ENCODE measurements at regions of chr1 and their contacts with region 1.

Region 1: GRCh38 chr1:64136752-64137411 is 66.5 kb upstream of the UBE2U start:
- DNase-seq: peak; percentile 80
- H3K4me3 ChIP-seq: no peak overlapping the region
- H3K27ac ChIP-seq: peak overlapping the region in 1 of 4 donors; percentile 30
- H3K4me1 ChIP-seq: peaks cover 0 to 11% (median 0%) of the 10 kb centered on the region in 4 donors
- H3K27me3 ChIP-seq: no peaks in the 10 kb centered on the region
- CTCF ChIP-seq: peak; percentile 84 to 91 (median 88)
- EP300 ChIP-seq: no peak
- POLR2A ChIP-seq: no peak

Region 2: GRCh38 chr1:63615768-63616420 is 521.0 kb before region 1 on chr1:
- in situ Hi-C with region 1: loop called in 2 of 4 experiments (anchors 10 kb)
- intact Hi-C with region 1: no loop called
- DNase-seq: peak; percentile 52
- H3K4me3 ChIP-seq: no peak overlapping the region
- H3K27ac ChIP-seq: no peak overlapping the region
- H3K4me1 ChIP-seq: peaks cover 0 to 6% (median 2%) of the 10 kb centered on the region in 4 donors
- H3K27me3 ChIP-seq: no peaks in the 10 kb centered on the region
- CTCF ChIP-seq: peak; percentile 75 to 84 (median 79)
- EP300 ChIP-seq: no peak
- POLR2A ChIP-seq: no peak

Region 3: GRCh38 chr1:63683759-63684158 is 453.1 kb before region 1 on chr1:
- in situ Hi-C with region 1: loop called in 2 of 4 experiments (anchors 25 kb)
- intact Hi-C with region 1: loop called (anchors 1 kb)
- DNase-seq: no peak
- H3K4me3 ChIP-seq: no peak overlapping the region
- H3K27ac ChIP-seq: no peak overlapping the region
- H3K4me1 ChIP-seq: no peaks in the 10 kb centered on the region
- H3K27me3 ChIP-seq: no peaks in the 10 kb centered on the region
- CTCF ChIP-seq: no peak
- EP300 ChIP-seq: no peak
- POLR2A ChIP-seq: no peak

Region 4: DNA sequence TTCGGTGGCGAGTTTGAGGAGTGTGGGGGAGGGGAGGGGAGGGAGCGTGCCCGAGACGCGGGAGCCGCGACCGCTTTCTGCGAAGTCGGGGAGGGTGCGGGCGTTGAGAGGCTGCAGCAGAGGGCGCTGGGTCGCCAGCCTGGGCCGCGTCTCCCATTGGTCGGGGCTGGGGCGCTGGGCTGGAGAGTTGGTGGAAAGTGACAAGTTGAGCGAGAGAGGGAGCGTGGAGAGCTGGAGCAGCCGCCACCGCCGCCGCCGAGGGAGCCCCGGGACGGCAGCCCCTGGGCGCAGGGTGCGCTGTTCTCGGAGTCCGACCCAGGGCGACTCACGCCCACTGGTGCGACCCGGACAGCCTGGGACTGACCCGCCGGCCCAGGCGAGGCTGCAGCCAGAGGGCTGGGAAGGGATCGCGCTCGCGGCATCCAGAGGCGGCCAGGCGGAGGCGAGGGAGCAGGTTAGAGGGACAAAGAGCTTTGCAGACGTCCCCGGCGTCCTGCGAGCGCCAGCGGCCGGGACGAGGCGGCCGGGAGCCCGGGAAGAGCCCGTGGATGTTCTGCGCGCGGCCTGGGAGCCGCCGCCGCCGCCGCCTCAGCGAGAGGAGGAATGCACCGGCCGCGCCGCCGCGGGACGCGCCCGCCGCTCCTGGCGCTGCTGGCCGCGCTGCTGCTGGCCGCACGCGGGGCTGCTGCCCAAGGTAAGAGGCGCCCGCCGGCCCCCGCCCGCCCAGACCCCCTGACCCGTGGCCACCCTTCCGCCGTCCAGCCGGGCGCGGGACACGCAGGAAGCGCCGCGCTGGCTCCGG is 362.9 kb before region 1 on chr1 and contains the start of gene ROR1:
- in situ Hi-C with region 1: loop called in 1 of 4 experiments (anchors 10 kb)
- intact Hi-C with region 1: loop called (anchors 2 kb)
- DNase-seq: peak; percentile 89
- H3K4me3 ChIP-seq: peak within 1 kb of the TSS; percentile 52 to 79 (median 66)
- H3K27ac ChIP-seq: peak within 1 kb of the TSS; percentile 87 to 92 (median 88)
- H3K4me1 ChIP-seq: peaks cover 0 to 28% (median 7%) of the 10 kb centered on the region in 4 donors
- H3K27me3 ChIP-seq: peaks cover 9% of the 10 kb centered on the region
- CTCF ChIP-seq: peak; percentile 56 to 77 (median 64)
- EP300 ChIP-seq: no peak
- POLR2A ChIP-seq: peak; percentile 47
- total RNA-seq, gene ROR1: 3.0 to 6.7 (median 4.6) TPM

Region 5: DNA sequence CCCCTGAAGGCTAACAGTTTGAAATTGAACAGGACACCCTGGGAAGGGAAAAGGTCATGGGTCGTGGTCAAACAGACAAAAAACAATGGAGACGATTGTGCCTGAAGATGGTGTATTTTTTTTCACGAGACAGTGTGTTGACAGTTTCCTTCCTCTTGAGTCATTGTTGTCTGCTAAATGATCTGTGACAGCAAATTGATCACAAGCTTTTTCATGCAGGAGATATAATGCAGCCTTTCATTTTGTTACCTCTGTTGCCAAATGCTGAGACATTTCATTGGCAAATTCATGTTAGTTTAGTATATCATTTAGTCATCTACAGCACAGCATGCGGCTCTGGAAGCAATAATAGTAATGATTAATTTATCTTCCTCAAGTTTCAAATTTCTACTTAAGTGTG is 94.3 kb after region 1 on chr1:
- in situ Hi-C with region 1: loop called in 1 of 4 experiments (anchors 10 kb)
- intact Hi-C with region 1: no loop called
- DNase-seq: no peak
- H3K4me3 ChIP-seq: no peak overlapping the region
- H3K27ac ChIP-seq: no peak overlapping the region
- H3K4me1 ChIP-seq: no peaks in the 10 kb centered on the region
- H3K27me3 ChIP-seq: no peaks in the 10 kb centered on the region
- CTCF ChIP-seq: no peak
- EP300 ChIP-seq: no peak
- POLR2A ChIP-seq: no peak

Region 6: GRCh38 chr1:64654519-64655341 is 517.8 kb after region 1 on chr1:
- in situ Hi-C with region 1: no loop called
- intact Hi-C with region 1: no loop called
- DNase-seq: no peak
- H3K4me3 ChIP-seq: no peak overlapping the region
- H3K27ac ChIP-seq: no peak overlapping the region
- H3K4me1 ChIP-seq: no peaks in the 10 kb centered on the region
- H3K27me3 ChIP-seq: no peaks in the 10 kb centered on the region
- CTCF ChIP-seq: no peak
- EP300 ChIP-seq: no peak
- POLR2A ChIP-seq: no peak

Region 7: DNA sequence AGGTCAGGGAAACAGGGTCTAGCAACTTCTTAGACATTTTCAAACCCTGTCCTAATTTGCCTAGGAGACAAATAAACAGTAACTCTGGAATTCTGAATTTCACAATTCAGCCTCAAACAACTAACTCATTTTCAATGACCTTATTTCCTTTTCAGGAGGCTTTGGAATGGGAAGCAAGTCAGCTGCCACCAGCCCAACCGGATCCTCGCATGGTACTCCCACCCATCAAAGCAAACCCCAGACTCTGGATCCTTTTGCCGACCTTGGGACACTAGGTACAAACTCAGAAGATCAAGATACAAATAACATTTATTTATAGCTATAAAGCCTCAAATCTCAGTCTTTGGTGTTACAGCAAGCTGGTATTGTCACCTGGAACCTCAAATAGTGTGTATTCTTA is 1264.7 kb after region 1 on chr1:
- in situ Hi-C with region 1: no loop called
- intact Hi-C with region 1: no loop called
- DNase-seq: no peak
- H3K4me3 ChIP-seq: no peak overlapping the region
- H3K27ac ChIP-seq: no peak overlapping the region
- H3K4me1 ChIP-seq: no peaks in the 10 kb centered on the region
- H3K27me3 ChIP-seq: no peaks in the 10 kb centered on the region
- CTCF ChIP-seq: no peak
- EP300 ChIP-seq: no peak
- POLR2A ChIP-seq: no peak